RWPE1 (cell line): ENCODE measurements at regions of chr15 and their contacts with region 1.

Region 1: GRCh38 chr15:101269479-101270223 is 7.6 kb downstream of the SELENOS start:
- DNase-seq: no peak
- H3K27ac ChIP-seq: 0 out of 2 replicates have a peak overlapping the region, but pooled peaks have one; percentile 2
- CTCF ChIP-seq: no peak; the same call in 1 of the 2 replicates

Region 2: GRCh38 chr15:100794008-100794407 is 475.6 kb before region 1 on chr15:
- CTCF ChIA-PET with region 1: no interaction called
- POLR2A ChIA-PET with region 1: interaction called, 14 read pairs
- DNase-seq: no peak
- H3K27ac ChIP-seq: no peak overlapping the region
- CTCF ChIP-seq: no peak